Panc1 (cell line): ENCODE measurements at regions of chr1 and their contacts with region 1.

Region 1: GRCh38 chr1:47280157-47280556 is 33.8 kb downstream of the STIL start:
- DNase-seq: no peak
- ATAC-seq: no peak
- H3K4me3 ChIP-seq: no peak overlapping the region
- H3K27ac ChIP-seq: no peak overlapping the region
- H3K4me1 ChIP-seq: no peaks in the 10 kb centered on the region
- H3K27me3 ChIP-seq: no peaks in the 10 kb centered on the region
- CTCF ChIP-seq: no peak

Region 2: GRCh38 chr1:47262787-47263413 is 17.3 kb before region 1 on chr1:
- CTCF ChIA-PET with region 1: no interaction called
- POLR2A ChIA-PET with region 1: no interaction called
- in situ Hi-C with region 1: no loop called
- intact Hi-C with region 1: no loop called
- DNase-seq: peak; percentile 33
- ATAC-seq: peak; percentile 79
- H3K4me3 ChIP-seq: no peak overlapping the region
- H3K27ac ChIP-seq: no peak overlapping the region
- H3K4me1 ChIP-seq: no peaks in the 10 kb centered on the region
- H3K27me3 ChIP-seq: no peaks in the 10 kb centered on the region
- CTCF ChIP-seq: peak; percentile 77

Region 3: GRCh38 chr1:47298025-47298699 is 18.0 kb after region 1 on chr1:
- CTCF ChIA-PET with region 1: no interaction called
- POLR2A ChIA-PET with region 1: interaction called, 15 read pairs
- in situ Hi-C with region 1: no loop called
- intact Hi-C with region 1: no loop called
- DNase-seq: no peak
- ATAC-seq: no peak
- H3K4me3 ChIP-seq: no peak overlapping the region
- H3K27ac ChIP-seq: no peak overlapping the region
- H3K4me1 ChIP-seq: no peaks in the 10 kb centered on the region
- H3K27me3 ChIP-seq: no peaks in the 10 kb centered on the region
- CTCF ChIP-seq: no peak